B cell (primary cell): ENCODE measurements at regions of chr1 and their contacts with region 1.

Region 1: DNA sequence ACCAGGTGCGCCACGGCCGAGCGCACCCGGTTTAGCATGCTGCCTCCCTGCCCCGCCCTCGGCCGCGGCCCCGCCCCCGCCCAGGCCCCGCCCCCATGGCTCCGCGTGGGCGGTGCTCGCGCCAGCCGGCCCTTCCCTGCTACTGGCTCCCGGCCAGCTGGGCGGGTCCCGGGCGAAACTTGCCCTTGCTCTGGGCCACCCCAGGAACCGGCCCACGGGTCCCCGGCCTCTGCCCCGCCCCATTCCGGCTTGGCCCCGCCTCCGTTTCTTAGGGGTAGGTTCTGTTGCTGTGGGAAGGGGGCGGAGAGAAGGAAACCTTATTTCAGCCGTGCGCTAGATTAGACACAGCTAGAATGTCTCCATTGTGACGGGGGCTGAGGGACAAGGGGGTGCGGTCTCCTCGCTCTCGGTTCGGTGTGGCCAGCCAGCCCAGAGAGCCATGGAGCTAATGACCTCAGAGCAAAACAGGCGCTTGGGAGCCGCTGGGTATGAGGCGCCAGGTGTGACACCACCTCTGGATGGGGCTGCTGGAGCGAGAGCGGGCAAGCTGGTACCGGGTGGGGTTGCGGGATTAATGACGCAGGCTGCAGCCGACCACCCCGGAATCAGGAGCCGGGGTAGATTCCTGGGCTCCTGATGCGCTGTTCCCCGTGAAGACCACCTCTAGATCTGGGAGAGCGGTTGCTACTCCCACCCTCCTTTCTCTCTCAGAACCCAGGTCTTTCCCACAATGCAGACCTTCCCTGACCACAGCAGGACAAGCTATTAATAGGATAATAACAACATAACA is at the start of gene PPM1J:
- DNase-seq: peak; percentile 97
- ATAC-seq: peak; percentile 86
- H3K4me3 ChIP-seq: peak within 1 kb of the TSS; percentile 62 to 82 (median 72)
- H3K4me3 Mint-ChIP-seq: peak within 1 kb of the TSS; percentile 93
- H3K27ac ChIP-seq: peak within 1 kb of the TSS; percentile 25 to 59
- H3K27ac Mint-ChIP-seq: peak within 1 kb of the TSS; percentile 85
- H3K4me1 ChIP-seq: peaks cover 26 to 47% of the 10 kb centered on the region in 2 donors
- H3K4me1 Mint-ChIP-seq: peaks cover 25% of the 10 kb centered on the region
- H3K27me3 ChIP-seq: peaks cover 0 to 16% (median 7%) of the 10 kb centered on the region in 4 experiments
- H3K27me3 Mint-ChIP-seq: peaks cover 15% of the 10 kb centered on the region
- CTCF ChIP-seq: no peak
- total RNA-seq, gene PPM1J: 1.7 and 2.1 TPM in 2 replicates

Region 2: DNA sequence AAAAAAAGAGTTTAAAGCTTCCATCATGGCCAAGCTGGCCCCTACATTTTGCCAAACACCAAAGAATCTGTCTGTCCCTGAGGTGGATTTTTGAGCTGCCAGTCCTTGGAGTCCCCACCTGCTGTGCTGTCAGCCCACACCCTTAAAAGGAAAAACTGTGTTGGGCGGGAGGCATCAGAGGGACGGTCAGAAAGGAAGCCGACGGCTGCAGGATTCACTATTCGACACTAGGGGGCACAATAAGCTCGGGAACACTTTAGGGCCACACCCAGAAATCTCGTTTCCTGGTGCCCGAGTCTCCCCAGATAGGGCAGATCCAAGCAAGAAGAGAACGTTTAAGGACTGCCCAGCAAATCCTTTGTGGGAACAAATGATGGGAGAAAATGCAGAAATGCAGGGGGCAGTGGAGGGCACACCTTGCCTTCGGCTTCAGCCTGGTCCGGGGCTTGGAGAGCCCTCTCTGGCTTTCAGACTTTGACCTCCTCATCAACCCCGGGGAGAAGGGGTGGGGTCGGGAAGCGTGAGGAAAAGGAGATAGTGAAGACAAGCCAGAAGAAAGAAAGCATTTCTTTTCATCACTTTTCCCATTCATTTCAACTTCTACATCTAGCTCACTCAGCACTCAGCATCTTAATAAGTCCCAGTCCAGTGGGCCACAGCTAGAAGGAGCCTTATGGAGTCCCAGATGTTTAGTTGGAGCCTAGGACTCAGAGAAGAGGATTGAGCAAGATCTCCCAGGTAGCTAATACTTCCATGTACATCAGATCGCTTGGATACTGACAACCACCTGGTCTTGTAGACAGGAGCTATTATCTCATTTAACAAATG is 324.5 kb before region 1 on chr1:
- CTCF ChIA-PET with region 1: interaction called, 122 read pairs
- POLR2A ChIA-PET with region 1: interaction called, 3 read pairs
- intact Hi-C with region 1: no loop called
- DNase-seq: peak; percentile 90
- ATAC-seq: peak; percentile 92
- H3K4me3 ChIP-seq: peak overlapping the region in 1 of 5 experiments; percentile 17
- H3K4me3 Mint-ChIP-seq: peak overlapping the region; percentile 13
- H3K27ac ChIP-seq: no peak overlapping the region
- H3K27ac Mint-ChIP-seq: peak overlapping the region; percentile 15
- H3K4me1 ChIP-seq: peaks cover 17 to 21% of the 10 kb centered on the region in 2 donors
- H3K4me1 Mint-ChIP-seq: peaks cover 24% of the 10 kb centered on the region
- H3K27me3 ChIP-seq: peaks cover 0 to 12% (median 0%) of the 10 kb centered on the region in 4 experiments
- H3K27me3 Mint-ChIP-seq: peaks cover 13% of the 10 kb centered on the region
- CTCF ChIP-seq: peak; percentile 96

Region 3: DNA sequence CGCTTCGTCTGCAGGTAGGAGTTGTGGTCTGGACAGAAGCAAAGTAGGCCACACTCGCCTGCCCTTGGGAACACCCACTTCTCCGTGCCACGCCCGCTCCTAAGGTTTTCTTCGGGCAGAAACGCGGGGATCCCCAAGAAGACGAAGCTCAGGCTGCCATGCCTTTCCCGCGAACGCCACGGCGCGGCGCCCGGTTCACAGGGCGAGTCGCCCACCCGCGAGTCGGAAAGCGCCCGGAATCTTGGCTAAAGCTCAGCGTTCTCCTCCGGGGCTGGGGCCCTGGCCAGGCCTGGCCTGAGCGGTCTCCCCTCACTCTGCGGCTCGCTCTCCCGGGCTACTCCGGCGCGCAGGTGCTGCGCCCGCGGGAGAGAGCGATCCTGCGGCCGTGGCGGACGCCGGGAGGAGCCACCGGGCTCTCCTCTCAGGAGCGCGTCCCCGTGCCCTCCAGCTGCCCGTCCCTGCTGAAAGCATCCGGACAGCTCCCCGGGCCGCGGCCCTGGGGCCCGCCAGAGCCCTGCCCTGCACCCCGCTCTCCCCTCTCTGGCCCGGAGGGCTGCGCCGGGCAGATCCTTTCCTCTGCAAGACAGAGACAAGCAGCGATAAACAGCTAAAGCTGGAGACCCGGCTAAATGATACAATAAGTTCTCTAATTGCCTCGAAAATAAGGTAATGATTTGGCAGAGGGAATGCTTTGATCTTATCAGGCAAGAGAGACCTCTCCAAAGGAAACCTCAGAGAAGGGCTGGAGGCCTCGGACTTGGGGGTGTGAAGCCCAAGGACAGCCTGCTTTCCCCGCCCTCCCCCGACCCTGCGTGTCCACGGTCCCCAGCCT is 213.4 kb before region 1 on chr1:
- CTCF ChIA-PET with region 1: interaction called, 18 read pairs
- POLR2A ChIA-PET with region 1: no interaction called
- intact Hi-C with region 1: no loop called
- DNase-seq: peak; percentile 72
- ATAC-seq: peak; percentile 76
- H3K4me3 ChIP-seq: peak overlapping the region in 4 of 5 experiments; percentile 22 to 61 (median 54)
- H3K4me3 Mint-ChIP-seq: peak overlapping the region; percentile 86
- H3K27ac ChIP-seq: no peak overlapping the region
- H3K27ac Mint-ChIP-seq: no peak overlapping the region
- H3K4me1 ChIP-seq: peaks cover 35 to 43% of the 10 kb centered on the region in 2 donors
- H3K4me1 Mint-ChIP-seq: peaks cover 43% of the 10 kb centered on the region
- H3K27me3 ChIP-seq: peaks cover 0 to 69% (median 31%) of the 10 kb centered on the region in 4 experiments
- H3K27me3 Mint-ChIP-seq: peaks cover 68% of the 10 kb centered on the region
- CTCF ChIP-seq: peak; percentile 63

Region 4: DNA sequence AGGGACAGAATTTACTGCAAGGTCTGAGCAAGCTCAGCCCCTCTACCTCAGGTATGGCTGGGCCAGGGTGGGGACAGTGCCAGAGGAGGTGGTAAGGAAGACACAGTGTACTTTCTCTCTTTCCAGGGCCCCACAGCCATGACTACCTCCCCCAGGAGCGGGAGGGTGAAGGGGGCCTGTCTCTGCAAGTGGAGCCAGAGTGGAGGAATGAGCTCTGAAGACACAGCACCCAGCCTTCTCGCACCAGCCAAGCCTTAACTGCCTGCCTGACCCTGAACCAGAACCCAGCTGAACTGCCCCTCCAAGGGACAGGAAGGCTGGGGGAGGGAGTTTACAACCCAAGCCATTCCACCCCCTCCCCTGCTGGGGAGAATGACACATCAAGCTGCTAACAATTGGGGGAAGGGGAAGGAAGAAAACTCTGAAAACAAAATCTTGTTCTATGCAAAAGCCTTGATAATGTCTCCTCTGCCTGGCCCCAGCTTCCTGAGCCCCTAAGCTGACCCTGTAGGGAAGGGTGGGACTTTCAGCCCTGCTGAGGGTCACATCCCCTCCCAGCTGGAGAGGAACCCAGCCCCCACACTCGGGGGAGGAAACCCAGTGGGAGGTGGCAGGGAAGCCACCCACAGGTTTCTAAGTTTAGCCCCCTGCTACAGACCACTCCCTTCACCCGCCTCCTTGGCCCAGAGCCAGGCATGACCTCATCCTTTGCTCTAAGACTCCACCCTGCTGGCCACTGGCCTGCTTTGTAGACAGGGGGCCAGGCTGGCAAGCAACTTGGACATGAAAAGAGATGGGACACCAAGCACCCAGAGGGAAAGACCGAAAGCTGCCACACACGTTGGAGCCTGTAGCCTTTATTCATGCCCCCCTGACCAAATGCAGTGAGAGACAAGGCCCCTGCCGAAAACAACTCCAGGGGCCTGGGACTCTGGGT is 14.9 kb before region 1 on chr1:
- CTCF ChIA-PET with region 1: interaction called, 24 read pairs
- POLR2A ChIA-PET with region 1: interaction called, 3 read pairs
- intact Hi-C with region 1: loop called (anchors 2 kb)
- DNase-seq: peak; percentile 77
- ATAC-seq: peak; percentile 79
- H3K4me3 ChIP-seq: peak overlapping the region in 1 of 5 experiments; percentile 28
- H3K4me3 Mint-ChIP-seq: peak overlapping the region; percentile 77
- H3K27ac ChIP-seq: peak overlapping the region; percentile 79 to 86
- H3K27ac Mint-ChIP-seq: peak overlapping the region; percentile 96
- H3K4me1 ChIP-seq: peaks cover 49 to 59% of the 10 kb centered on the region in 2 donors
- H3K4me1 Mint-ChIP-seq: peaks cover 63% of the 10 kb centered on the region
- H3K27me3 ChIP-seq: no peaks in the 10 kb centered on the region
- H3K27me3 Mint-ChIP-seq: no peaks in the 10 kb centered on the region
- CTCF ChIP-seq: no peak

Region 5: GRCh38 chr1:112955781-112956543 is 240.5 kb after region 1 on chr1 and contains the start of gene SLC16A1:
- CTCF ChIA-PET with region 1: interaction called, 5 read pairs
- POLR2A ChIA-PET with region 1: no interaction called
- intact Hi-C with region 1: loop called (anchors 1 kb)
- DNase-seq: peak; percentile 94
- ATAC-seq: peak; percentile 84
- H3K4me3 ChIP-seq: peak within 1 kb of the TSS; percentile 53 to 97 (median 88)
- H3K4me3 Mint-ChIP-seq: peak within 1 kb of the TSS; percentile 99
- H3K27ac ChIP-seq: peak within 1 kb of the TSS; percentile 88 to 92
- H3K27ac Mint-ChIP-seq: peak within 1 kb of the TSS; percentile 99
- H3K4me1 ChIP-seq: peaks cover 26 to 30% of the 10 kb centered on the region in 2 donors
- H3K4me1 Mint-ChIP-seq: peaks cover 48% of the 10 kb centered on the region
- H3K27me3 ChIP-seq: no peaks in the 10 kb centered on the region
- H3K27me3 Mint-ChIP-seq: no peaks in the 10 kb centered on the region
- CTCF ChIP-seq: no peak
- total RNA-seq, gene SLC16A1: 13.0 and 15.8 TPM in 2 replicates

Region 6: DNA sequence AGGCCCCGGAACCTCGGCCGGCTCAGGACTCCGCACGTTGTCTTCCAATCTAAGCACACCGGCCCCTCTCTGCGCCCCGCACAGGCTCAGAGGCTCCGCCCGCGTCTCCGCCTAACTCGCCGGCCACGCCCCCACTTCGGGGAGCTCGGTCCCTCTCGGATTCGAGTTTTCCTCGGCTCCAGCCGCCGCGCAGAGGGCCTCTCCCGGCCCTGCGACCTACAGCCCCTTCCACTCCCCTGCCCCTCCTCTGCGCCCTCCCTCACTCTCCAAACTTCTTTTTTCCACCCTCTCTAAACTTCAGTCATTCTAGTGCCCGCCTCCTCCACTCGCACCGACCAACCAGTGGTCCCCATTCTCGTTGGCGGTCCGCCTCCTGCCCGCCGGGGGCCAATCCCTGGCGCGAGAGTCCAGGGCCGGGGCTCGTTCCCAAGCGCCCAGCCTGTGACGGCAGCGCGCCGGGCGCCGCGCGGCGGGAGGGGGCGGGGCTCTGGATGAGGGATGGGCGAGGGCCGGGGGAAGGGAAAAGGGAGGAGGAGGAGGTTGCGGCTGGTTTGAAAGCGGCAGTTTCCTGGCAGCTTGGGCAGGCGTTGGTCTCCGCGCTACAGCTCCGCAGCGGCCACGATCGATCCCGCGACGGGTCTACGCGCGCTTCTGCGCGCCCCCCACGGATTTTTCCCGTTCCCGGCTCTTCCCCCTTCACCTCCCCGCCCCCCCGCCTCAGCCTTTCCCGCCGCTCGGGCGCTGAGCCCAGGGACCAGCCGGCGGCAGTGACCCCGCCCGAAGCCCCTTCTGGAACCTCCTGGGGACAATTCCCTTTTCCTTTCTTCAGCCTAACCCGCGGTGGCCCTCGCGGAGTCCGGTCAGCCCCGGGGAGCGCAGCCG is 674.7 kb after region 1 on chr1 and contains the start of gene MAGI3:
- CTCF ChIA-PET with region 1: interaction called, 3 read pairs
- POLR2A ChIA-PET with region 1: no interaction called
- intact Hi-C with region 1: loop called (anchors 5 kb)
- DNase-seq: peak; percentile 88
- ATAC-seq: peak; percentile 96
- H3K4me3 ChIP-seq: peak within 1 kb of the TSS; percentile 22 to 83 (median 76)
- H3K4me3 Mint-ChIP-seq: peak within 1 kb of the TSS; percentile 89
- H3K27ac ChIP-seq: no peak within 1 kb of the TSS
- H3K27ac Mint-ChIP-seq: peak within 1 kb of the TSS; percentile 42
- H3K4me1 ChIP-seq: peaks cover 16 to 19% of the 10 kb centered on the region in 2 donors
- H3K4me1 Mint-ChIP-seq: peaks cover 21% of the 10 kb centered on the region
- H3K27me3 ChIP-seq: peaks cover 0 to 22% (median 15%) of the 10 kb centered on the region in 4 experiments
- H3K27me3 Mint-ChIP-seq: peaks cover 43% of the 10 kb centered on the region
- CTCF ChIP-seq: no peak
- total RNA-seq, gene MAGI3: 0.67 and 0.83 TPM in 2 replicates

Region 7: DNA sequence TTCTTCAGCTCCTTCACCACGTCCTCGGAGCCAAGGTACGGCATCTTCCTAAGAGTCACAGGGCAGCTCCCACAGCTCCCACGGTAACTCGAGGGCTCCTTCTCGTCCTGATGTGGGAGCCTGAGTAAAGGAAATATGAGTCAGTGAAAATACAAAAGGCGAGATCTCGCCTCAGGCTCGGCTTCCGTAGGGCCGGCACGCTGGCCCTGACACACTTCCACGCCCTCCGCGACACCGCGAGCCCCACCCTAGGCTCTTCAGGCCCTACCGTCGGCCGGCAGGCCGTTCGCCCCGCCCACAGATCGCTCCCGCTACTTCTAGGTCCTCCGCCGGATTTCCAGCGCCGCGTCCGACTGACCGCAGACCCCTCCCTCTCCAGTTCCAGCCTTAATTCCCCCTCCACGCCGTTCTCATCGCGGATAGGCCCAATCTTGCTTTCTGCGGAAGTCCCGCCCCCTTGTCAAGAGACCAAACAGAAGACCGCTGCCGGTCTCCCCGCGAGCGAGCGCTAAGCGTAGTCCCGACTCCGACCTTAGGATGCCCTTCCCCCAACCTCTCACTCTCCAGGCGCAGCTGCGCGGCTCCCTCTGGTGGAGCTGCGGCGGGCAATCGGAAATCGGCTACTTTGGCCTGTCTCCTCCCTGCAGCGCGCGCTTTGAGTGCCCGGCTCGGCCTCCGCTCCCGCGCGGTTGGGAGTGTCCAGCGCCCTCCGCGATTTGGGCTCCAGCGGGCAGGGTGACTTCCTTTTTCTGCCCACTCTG is 1189.4 kb after region 1 on chr1 and contains the starts of genes AP4B1 and DCLRE1B:
- CTCF ChIA-PET with region 1: interaction called, 4 read pairs
- POLR2A ChIA-PET with region 1: no interaction called
- intact Hi-C with region 1: loop called (anchors 10 kb)
- DNase-seq: peak; percentile 99
- ATAC-seq: peak; percentile 90
- H3K4me3 ChIP-seq: peak within 1 kb of the TSS; percentile 87 to 98 (median 92)
- H3K4me3 Mint-ChIP-seq: peak within 1 kb of the TSS; percentile 92
- H3K27ac ChIP-seq: peak within 1 kb of the TSS; percentile 87 to 93
- H3K27ac Mint-ChIP-seq: peak within 1 kb of the TSS; percentile 99
- H3K4me1 ChIP-seq: peaks cover 32 to 39% of the 10 kb centered on the region in 2 donors
- H3K4me1 Mint-ChIP-seq: peaks cover 43% of the 10 kb centered on the region
- H3K27me3 ChIP-seq: no peaks in the 10 kb centered on the region
- H3K27me3 Mint-ChIP-seq: no peaks in the 10 kb centered on the region
- CTCF ChIP-seq: peak; percentile 71
- total RNA-seq, gene AP4B1: 51.5 and 52.2 TPM in 2 replicates
- total RNA-seq, gene DCLRE1B: 4.3 and 4.8 TPM in 2 replicates